HAP-1 (cell line): ENCODE measurements at regions of chr11 and their contacts with region 1.

Region 1: GRCh38 chr11:95764267-95764898 is 25.2 kb downstream of the FAM76B start:
- DNase-seq: peak in 1 of 2 experiments; percentile 68
- H3K4me3 ChIP-seq: no peak overlapping the region
- H3K4me1 ChIP-seq: no peaks in the 10 kb centered on the region
- H3K27me3 ChIP-seq: no peaks in the 10 kb centered on the region

Region 2: GRCh38 chr11:94623120-94623735 is 1141.2 kb before region 1 on chr11:
- in situ Hi-C with region 1: loop called (anchors 25 kb)
- DNase-seq: peak; percentile 60 to 75
- H3K4me3 ChIP-seq: no peak overlapping the region
- H3K4me1 ChIP-seq: no peaks in the 10 kb centered on the region
- H3K27me3 ChIP-seq: 0 out of 2 replicates have a peak, but pooled peaks cover 3% of the 10 kb centered on the region

Region 3: DNA sequence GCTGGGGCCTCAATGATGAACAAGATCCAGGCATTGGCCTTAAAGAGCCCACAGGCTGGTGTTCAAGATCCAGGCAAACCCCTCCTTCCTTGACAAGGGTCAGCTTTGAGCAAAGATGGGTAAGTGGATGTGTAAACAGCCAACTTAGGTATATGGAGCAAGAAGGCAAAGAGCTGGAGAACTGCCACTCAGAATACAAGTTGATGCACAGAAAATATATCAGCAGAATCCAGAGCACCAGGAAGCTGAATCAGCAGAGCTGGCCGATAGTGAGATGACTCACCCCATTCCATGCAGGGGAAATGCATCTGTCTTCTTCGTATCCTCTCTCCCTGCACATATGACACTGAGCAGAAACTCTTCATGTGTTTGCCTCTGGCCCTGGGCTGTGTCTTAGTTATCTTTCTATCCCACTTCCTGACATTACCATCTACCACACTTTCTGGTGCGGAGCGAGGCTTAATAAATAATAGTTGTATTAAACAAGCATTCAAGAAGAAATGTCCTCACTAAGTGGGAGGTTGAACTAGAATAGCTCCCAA is 616.9 kb before region 1 on chr11:
- in situ Hi-C with region 1: loop called (anchors 10 kb)
- DNase-seq: no peak
- H3K4me3 ChIP-seq: no peak overlapping the region
- H3K4me1 ChIP-seq: peaks cover 5% of the 10 kb centered on the region
- H3K27me3 ChIP-seq: no peaks in the 10 kb centered on the region

Region 4: DNA sequence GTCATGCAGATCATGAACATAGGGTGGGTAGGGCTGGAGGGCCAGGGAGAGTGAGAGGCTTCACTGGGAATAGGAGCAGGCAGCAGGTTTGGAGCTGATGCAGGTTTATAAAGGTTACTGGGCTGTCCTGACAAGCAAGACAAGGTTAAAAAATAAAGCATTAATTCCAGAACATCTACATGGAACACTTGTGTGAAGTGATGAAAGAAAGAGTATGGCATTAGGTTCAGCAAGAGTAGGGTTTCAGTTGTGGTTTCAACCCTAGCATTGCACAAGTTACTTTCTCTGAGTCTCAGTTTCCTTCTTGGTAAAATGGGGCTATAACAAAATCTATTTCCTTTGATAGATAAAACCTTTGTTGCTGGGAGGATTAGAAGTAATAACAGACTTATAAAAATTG is 418.7 kb before region 1 on chr11:
- in situ Hi-C with region 1: no loop called
- DNase-seq: no peak
- H3K4me3 ChIP-seq: no peak overlapping the region
- H3K4me1 ChIP-seq: peaks cover 3% of the 10 kb centered on the region; the same call in 1 of the 2 replicates
- H3K27me3 ChIP-seq: no peaks in the 10 kb centered on the region